CD8-positive, alpha-beta T cell (primary cell): ENCODE measurements at regions of chr5 and their contacts with region 1.

Region 1: DNA sequence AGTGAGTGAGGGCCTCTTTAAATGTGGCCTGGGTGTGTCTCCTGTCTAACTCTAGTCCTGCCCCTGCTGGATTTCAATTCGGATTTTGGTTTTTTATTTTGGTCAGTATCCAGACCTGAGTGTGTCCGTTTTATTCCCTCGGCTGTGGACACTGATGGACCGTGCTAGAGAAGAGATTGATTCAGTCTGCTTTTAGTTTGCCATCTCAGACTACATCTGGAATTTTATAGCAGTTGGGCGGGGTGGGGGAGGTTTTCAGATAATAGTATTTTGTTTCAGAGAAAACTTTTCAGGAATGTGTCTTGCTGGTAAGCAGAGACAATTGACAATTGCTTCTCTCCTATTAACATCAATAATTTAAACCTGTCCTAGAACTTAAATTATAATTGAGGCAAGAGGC is 308.1 kb downstream of the ARHGAP26 start:
- DNase-seq: no peak
- ATAC-seq: no peak
- H3K4me3 ChIP-seq: no peak overlapping the region
- H3K4me3 Mint-ChIP-seq: no peak overlapping the region
- H3K27ac ChIP-seq: no peak overlapping the region
- H3K27ac Mint-ChIP-seq: no peak overlapping the region
- H3K4me1 ChIP-seq: no peaks in the 10 kb centered on the region
- H3K4me1 Mint-ChIP-seq: no peaks in the 10 kb centered on the region
- H3K27me3 ChIP-seq: no peaks in the 10 kb centered on the region
- H3K27me3 Mint-ChIP-seq: no peaks in the 10 kb centered on the region
- CTCF ChIP-seq: no peak

Region 2: DNA sequence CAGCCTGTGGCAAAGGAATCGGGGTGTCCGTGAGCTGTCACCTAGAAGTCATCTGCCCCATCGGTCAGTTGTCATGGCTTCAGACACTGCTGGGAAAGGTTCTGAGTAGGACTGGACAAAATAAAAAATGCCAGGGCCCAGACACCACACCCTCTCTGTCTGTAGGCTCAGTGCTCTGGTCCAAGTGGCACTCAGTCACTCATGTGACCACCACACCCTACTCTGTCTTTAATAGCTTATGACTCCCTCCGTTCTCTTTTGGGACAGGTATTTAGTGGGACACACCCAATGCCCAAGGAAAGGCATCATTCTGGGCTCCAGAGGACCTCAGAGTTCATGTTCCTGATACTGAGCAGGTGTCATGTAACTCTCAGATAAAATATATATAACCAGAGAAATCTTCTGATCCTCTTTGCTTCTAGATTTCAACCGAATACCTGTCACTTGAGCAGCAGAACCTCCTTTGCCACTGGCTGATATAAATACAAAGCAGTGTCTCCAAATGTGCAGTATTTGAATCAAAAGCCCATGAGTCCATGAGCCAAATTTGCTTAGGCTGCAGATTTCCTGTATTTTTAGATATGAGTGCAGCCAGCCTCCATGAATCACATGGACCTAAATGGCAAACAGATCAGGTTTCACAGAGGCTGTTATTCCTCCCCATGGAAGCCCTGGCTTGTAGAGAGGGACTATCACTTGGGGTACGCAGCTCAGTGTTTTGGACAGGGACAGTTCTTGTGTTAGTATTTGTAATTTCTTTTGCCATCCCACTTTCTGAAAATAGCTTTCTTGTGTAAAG is 36.1 kb before region 1 on chr5:
- CTCF ChIA-PET with region 1: no interaction called
- POLR2A ChIA-PET with region 1: no interaction called
- intact Hi-C with region 1: loop called in 1 of 2 experiments (anchors 5 kb)
- DNase-seq: no peak
- ATAC-seq: no peak
- H3K4me3 ChIP-seq: no peak overlapping the region
- H3K4me3 Mint-ChIP-seq: no peak overlapping the region
- H3K27ac ChIP-seq: no peak overlapping the region
- H3K27ac Mint-ChIP-seq: no peak overlapping the region
- H3K4me1 ChIP-seq: no peaks in the 10 kb centered on the region
- H3K4me1 Mint-ChIP-seq: peaks cover 2% of the 10 kb centered on the region
- H3K27me3 ChIP-seq: no peaks in the 10 kb centered on the region
- H3K27me3 Mint-ChIP-seq: no peaks in the 10 kb centered on the region
- CTCF ChIP-seq: no peak